Activated T-helper 2 cell treated with anti-CD3 and anti-CD28 coated beads, Interferon-gamma antibody, Interleukin-2, Interleukin-4, amounts not matched to agents 10 μg/mL and 5 μg/mL and 100 μg/mL, durations not matched to agents 14 hours and 24 hours and 36 hours (primary cell): ENCODE measurements at regions of chr5 and their contacts with region 1.

Region 1: DNA sequence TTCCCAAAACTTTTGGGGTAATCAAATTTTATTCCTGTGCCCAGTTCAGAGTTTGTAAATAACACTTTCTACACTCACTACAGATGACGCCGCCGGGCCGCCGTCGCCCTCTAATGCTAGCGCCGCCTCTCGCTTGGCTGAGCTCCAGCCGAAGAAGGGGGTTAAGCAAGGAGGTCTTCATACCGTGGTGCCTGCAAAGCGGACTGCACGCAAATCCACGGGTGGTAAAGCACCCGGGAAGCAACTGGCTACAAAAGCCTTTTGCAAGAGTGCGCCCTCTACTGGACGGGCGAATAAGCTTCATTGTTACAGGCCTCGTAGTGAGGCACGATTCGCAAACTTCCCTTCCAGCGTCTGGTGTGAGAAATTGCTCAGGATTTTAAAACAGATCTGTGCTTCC is 280.4 kb downstream of the MEF2C start:
- DNase-seq: peak; percentile 16
- H3K4me3 Mint-ChIP-seq: no peak overlapping the region
- H3K27ac Mint-ChIP-seq: no peak overlapping the region
- H3K4me1 Mint-ChIP-seq: no peaks in the 10 kb centered on the region
- H3K27me3 Mint-ChIP-seq: no peaks in the 10 kb centered on the region

Region 2: DNA sequence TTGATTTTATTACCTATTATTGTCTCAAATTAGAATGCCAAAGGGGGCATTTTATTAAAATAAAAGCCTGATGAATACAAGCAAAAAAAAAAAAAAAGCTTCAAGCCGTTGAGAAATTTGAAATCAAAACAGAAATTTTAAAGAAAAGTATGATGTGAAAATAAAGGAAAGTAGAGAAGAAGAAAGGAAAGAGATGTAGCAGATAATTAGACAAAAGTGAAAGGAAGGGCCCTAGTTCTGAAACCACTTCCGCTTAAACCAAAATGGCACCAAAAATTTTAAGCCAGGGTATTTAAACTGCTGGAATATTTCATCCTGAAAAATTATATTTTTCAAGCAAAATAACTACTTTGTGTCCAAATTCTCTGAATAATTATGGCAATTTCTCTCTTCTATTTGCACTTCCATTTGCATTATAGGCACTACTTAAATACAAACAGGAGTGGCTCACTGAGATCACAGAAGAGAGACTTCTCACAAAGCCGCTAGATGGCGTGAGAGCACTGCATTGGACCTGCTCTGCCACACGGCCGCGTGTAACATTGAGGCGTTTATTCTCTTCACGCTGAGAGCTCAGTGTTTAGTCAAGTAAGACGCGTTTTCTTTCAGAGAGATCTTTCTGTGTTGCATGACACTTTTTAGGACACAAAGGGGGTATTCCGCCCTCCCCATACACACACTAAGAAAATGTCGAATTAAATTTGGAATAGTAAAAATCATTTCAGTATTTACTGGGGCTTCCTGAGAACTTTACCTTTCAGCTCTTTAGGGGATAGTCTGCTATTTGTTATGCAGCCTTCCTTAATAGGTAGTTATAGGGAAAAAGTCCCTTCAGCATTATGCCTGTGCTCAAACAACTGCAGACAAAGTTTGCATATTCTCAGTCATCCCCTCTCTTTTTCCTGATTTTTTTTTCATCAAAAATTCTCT is 821.5 kb before region 1 on chr5:
- intact Hi-C with region 1: loop called (anchors 2 kb)
- DNase-seq: peak; percentile 57
- H3K4me3 Mint-ChIP-seq: no peak overlapping the region
- H3K27ac Mint-ChIP-seq: no peak overlapping the region
- H3K4me1 Mint-ChIP-seq: peaks cover 3% of the 10 kb centered on the region
- H3K27me3 Mint-ChIP-seq: peaks cover 13% of the 10 kb centered on the region